ENCODE measurements at regions of chr4 and their contacts with region 1.

Region 1: GRCh38 chr4:6546681-6547447 is 28.1 kb upstream of the MAN2B2 start:
- DNase-seq: peak; percentile 85
- H3K4me3 ChIP-seq: peak overlapping the region in 1 of 2 experiments; percentile 26; a peak in 1 of 4 replicates
- H3K27ac ChIP-seq: no peak overlapping the region
- H3K4me1 ChIP-seq: peaks cover 0 to 20% of the 10 kb centered on the region in 2 experiments; a peak in 1 of 4 replicates
- H3K27me3 ChIP-seq: no peaks in the 10 kb centered on the region
- CTCF ChIP-seq: peak; percentile 93
- EP300 ChIP-seq: no peak
- RAD21 ChIP-seq: peak; percentile 84

Region 2: GRCh38 chr4:6052679-6053078 is 494.2 kb before region 1 on chr4:
- CTCF ChIA-PET with region 1: no interaction called
- POLR2A ChIA-PET with region 1: no interaction called
- DNase-seq: no peak
- H3K4me3 ChIP-seq: no peak overlapping the region
- H3K27ac ChIP-seq: no peak overlapping the region
- H3K4me1 ChIP-seq: no peaks in the 10 kb centered on the region
- H3K27me3 ChIP-seq: no peaks in the 10 kb centered on the region
- CTCF ChIP-seq: no peak
- EP300 ChIP-seq: no peak
- RAD21 ChIP-seq: no peak

Region 3: DNA sequence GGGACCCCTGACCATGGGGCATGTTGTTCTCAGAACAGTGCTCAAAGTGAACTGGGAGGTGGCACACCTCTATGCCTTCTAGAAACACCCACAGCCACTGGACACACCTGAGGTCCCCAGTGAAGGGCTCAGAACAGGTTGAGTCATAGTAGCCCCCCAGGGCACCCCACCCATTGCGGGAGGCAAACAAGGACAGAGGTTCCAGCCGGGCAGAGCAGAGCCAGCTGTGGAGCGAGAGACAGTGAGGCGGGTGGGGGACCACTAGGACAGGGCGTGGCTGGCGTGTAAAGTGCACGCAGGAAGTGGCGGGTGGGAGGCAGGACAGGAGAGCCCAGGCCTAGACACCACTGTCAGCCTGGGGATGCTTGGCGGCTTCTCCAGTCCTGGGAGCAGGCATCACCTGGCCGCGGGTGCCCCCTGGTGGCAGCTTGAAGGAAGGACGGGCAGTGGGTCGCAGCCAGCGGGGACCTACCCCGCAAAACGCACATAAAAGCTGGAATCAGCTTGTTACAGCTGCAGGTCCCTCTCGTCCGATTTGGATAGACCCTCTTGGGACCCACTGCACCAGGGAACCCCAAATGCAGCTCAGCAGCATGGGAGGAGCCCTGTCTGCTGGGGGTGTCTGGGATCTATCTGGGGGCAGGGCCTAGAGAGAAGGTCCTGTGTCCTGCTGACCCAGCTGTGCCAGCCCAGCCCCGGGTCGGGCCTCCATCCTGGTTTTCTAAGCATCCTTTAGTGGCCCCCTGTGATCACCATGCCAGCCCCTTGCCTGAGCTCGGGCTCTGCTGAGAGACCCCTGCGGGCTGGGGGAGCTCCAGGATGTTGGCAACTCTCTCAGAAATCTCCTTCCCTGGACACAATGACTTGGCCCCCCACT is 219.6 kb before region 1 on chr4:
- CTCF ChIA-PET with region 1: interaction called, 248 read pairs
- POLR2A ChIA-PET with region 1: no interaction called
- DNase-seq: peak; percentile 94
- H3K4me3 ChIP-seq: peak overlapping the region in 1 of 2 experiments; percentile 55; a peak in 1 of 4 replicates
- H3K27ac ChIP-seq: no peak overlapping the region
- H3K4me1 ChIP-seq: peaks cover 0 to 3% of the 10 kb centered on the region in 2 experiments; a peak in 1 of 4 replicates
- H3K27me3 ChIP-seq: no peaks in the 10 kb centered on the region
- CTCF ChIP-seq: peak; percentile 81
- EP300 ChIP-seq: no peak
- RAD21 ChIP-seq: peak; percentile 99

Region 4: DNA sequence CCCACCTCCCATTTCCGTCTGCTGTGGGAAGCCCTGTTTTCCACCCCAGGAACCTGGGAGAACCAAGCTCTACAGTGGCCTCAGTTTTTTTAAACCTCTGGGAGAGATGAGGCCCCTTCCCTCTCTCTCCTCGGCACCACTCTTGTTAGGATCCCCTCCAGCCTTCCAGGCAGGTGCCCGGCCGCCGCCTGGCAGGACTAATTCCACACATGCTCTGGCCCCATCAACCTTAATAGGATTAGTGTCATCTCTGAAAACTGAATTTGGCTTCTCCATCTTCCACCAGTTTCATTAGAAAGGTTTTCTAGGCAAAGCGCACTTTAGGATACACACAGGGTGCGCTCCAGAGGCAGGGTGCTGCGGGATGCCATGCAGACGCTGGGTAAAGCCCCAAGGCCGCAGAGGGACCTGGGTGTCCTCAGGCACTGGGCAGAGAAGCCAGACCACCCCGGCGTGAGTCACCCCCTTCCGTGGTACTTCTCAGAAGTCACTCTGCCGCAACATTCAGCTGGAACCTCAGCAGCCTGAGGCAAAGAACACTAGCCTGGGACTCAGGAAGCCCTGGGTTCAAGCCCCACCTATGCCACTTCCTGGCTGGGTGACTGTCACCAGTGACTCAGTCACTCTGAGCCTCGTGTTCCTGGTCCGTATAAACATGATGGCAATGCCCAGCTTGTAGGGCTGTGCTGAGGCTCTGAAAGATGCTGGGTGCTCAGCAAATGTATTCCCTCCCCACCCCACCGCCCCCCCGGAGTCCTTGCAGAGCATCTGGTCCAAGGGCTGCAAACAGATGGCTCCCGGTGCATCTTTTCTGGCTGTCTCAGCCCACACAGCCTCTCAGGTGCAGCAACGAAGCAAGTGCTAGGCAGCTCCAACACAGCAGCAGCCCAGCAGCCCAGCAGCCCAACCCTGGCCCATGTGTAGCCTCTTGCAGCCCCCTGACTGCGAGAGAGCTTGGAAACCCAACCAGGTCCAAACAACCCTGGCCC is 103.5 kb before region 1 on chr4:
- CTCF ChIA-PET with region 1: no interaction called
- POLR2A ChIA-PET with region 1: no interaction called
- DNase-seq: peak; percentile 58
- H3K4me3 ChIP-seq: no peak overlapping the region
- H3K27ac ChIP-seq: no peak overlapping the region; a peak in 1 of 4 replicates
- H3K4me1 ChIP-seq: peaks cover 0 to 45% of the 10 kb centered on the region in 2 experiments; a peak in 1 of 4 replicates
- H3K27me3 ChIP-seq: no peaks in the 10 kb centered on the region
- CTCF ChIP-seq: no peak
- EP300 ChIP-seq: no peak
- RAD21 ChIP-seq: no peak

Region 5: GRCh38 chr4:6474107-6474511 is 72.8 kb before region 1 on chr4:
- CTCF ChIA-PET with region 1: interaction called, 59 read pairs
- POLR2A ChIA-PET with region 1: no interaction called
- DNase-seq: peak; percentile 60
- H3K4me3 ChIP-seq: no peak overlapping the region
- H3K27ac ChIP-seq: no peak overlapping the region
- H3K4me1 ChIP-seq: peaks cover 0 to 7% of the 10 kb centered on the region in 2 experiments; a peak in 1 of 4 replicates
- H3K27me3 ChIP-seq: peaks cover 13% of the 10 kb centered on the region
- CTCF ChIP-seq: no peak; the same call in 1 of the 2 replicates
- EP300 ChIP-seq: no peak
- RAD21 ChIP-seq: peak; percentile 21; the same call in 1 of the 2 replicates

Region 6: GRCh38 chr4:6523251-6523650 is 23.6 kb before region 1 on chr4:
- CTCF ChIA-PET with region 1: interaction called, 27 read pairs
- POLR2A ChIA-PET with region 1: no interaction called
- DNase-seq: no peak
- H3K4me3 ChIP-seq: no peak overlapping the region
- H3K27ac ChIP-seq: no peak overlapping the region
- H3K4me1 ChIP-seq: peaks cover 0 to 13% of the 10 kb centered on the region in 2 experiments; a peak in 1 of 4 replicates
- H3K27me3 ChIP-seq: no peaks in the 10 kb centered on the region
- CTCF ChIP-seq: no peak
- EP300 ChIP-seq: no peak
- RAD21 ChIP-seq: no peak

Region 7: DNA sequence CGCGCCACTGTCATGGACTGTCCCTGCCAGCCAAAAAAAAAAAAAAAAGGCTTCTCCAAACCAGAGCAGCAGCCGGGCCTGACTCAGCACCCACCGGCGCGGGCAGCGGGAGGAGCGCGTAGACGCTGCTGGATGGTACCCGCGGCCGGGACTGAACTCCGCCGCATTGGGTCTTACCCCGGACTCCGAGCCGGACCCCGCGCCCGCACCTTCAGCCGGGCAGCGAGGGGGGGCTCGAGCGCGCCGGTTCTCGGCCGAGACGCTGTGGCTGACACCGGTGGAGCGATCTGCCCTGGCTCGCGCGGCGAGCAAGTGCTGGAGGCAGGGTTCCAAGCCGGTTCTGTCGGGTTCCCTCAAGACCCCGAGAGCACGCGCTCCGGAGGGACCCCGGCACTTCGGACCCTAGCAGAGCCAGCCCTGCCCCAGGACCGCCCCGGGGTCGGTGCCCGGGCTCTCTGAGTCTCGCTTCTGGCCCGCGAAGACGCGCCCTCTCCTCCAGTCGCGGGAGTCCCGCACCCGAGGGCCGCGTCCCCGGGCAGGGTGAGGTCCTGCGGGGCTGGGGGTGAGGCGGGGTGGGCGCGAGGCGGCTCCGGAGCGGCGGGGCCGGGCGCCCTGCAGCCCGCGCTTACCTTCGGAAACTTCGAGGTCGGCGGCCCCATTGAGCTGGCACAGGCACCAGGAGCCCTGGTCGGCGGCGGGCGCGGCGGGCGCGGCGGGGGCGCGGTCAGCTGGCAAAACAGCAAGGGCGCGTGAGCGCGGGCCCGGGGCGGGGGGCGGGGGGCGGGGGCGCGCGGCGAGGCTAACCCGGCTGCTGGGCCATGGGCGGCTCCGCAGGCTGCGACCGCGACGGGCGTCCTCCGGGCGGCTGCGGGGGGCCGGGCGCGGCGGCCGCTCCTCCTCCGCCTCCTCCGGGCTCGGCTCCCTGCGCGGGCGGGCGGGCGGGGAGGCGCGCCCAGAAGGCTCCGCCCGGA is 16.4 kb after region 1 on chr4:
- CTCF ChIA-PET with region 1: interaction called, 87 read pairs
- POLR2A ChIA-PET with region 1: interaction called, 3 read pairs
- DNase-seq: peak; percentile 86
- H3K4me3 ChIP-seq: peak overlapping the region in 1 of 2 experiments; percentile 32; a peak in 1 of 4 replicates
- H3K27ac ChIP-seq: no peak overlapping the region
- H3K4me1 ChIP-seq: peaks cover 0 to 5% of the 10 kb centered on the region in 2 experiments; a peak in 1 of 4 replicates
- H3K27me3 ChIP-seq: peaks cover 31% of the 10 kb centered on the region
- CTCF ChIP-seq: no peak
- EP300 ChIP-seq: no peak
- RAD21 ChIP-seq: no peak